Dendritic cell treated with granulocyte-macrophage colony-stimulating factor and Interleukin-4, amounts not matched to agents 40 ng/mL and 50 ng/mL, for 4 days (primary cell): ENCODE measurements at regions of chr7 and their contacts with region 1.

Region 1: GRCh38 chr7:158695726-158696452 is 8.7 kb downstream of the NCAPG2 start:
- H3K4me3 Mint-ChIP-seq: no peak overlapping the region
- H3K27ac Mint-ChIP-seq: peak overlapping the region; percentile 45
- H3K4me1 Mint-ChIP-seq: peaks cover 7% of the 10 kb centered on the region
- H3K27me3 Mint-ChIP-seq: no peaks in the 10 kb centered on the region

Region 2: GRCh38 chr7:158387546-158387891 is 308.4 kb before region 1 on chr7:
- intact Hi-C with region 1: no loop called
- H3K4me3 Mint-ChIP-seq: no peak overlapping the region
- H3K27ac Mint-ChIP-seq: no peak overlapping the region
- H3K4me1 Mint-ChIP-seq: no peaks in the 10 kb centered on the region
- H3K27me3 Mint-ChIP-seq: no peaks in the 10 kb centered on the region

Region 3: GRCh38 chr7:158740013-158740656 is 44.2 kb after region 1 on chr7:
- intact Hi-C with region 1: loop called (anchors 5 kb)
- H3K4me3 Mint-ChIP-seq: peak overlapping the region; percentile 27
- H3K27ac Mint-ChIP-seq: peak overlapping the region; percentile 64
- H3K4me1 Mint-ChIP-seq: peaks cover 21% of the 10 kb centered on the region
- H3K27me3 Mint-ChIP-seq: no peaks in the 10 kb centered on the region

Region 4: DNA sequence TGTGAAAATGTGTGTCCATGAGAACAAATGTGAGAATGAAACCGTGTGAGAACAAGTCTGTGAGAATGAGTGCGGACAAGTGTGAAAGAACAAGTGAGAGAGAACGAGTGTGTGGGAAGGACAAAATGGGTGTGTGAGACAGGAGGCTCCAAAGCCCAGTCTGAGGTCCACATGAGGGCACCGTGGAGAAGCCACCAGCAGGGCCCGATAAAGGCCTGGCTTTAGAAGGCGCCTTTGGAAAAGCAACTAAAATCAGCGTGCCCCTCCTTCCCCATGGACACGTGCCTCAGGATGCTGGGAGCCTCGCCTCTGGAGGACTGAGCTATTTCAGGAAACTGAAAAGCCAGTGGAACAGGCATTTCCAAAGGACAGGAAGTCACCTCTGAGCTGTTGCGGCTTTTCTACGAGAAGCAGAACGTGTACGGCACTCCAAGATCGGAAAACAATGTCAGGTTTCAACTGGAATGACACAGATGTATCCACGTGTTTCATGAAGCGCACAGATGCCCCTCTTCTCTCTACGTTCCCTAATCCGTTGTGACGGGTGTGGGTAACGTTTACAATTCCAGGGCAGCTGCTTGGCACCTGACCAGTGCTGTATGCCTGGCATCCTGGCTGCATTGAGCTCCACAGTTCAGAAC is 87.0 kb after region 1 on chr7:
- intact Hi-C with region 1: no loop called
- H3K4me3 Mint-ChIP-seq: no peak overlapping the region
- H3K27ac Mint-ChIP-seq: no peak overlapping the region
- H3K4me1 Mint-ChIP-seq: no peaks in the 10 kb centered on the region
- H3K27me3 Mint-ChIP-seq: no peaks in the 10 kb centered on the region